Left ventricle myocardium inferior (tissue), 1 donor: ENCODE measurements at regions of chr9 and their contacts with region 1.

Region 1: GRCh38 chr9:94139672-94140417 is 55.6 kb downstream of the PTPDC1 start:
- DNase-seq: peak; percentile 85
- H3K4me3 ChIP-seq: peak overlapping the region; percentile 40
- H3K27ac ChIP-seq: peak overlapping the region; percentile 90
- H3K4me1 ChIP-seq: peaks cover 41% of the 10 kb centered on the region
- H3K27me3 ChIP-seq: no peaks in the 10 kb centered on the region
- CTCF ChIP-seq: no peak

Region 2: GRCh38 chr9:94084314-94084713 is 55.5 kb before region 1 on chr9 and contains the start of gene PTPDC1:
- intact Hi-C with region 1: loop called (anchors 10 kb)
- DNase-seq: no peak
- H3K4me3 ChIP-seq: peak within 1 kb of the TSS; percentile 23
- H3K27ac ChIP-seq: peak within 1 kb of the TSS; percentile 75
- H3K4me1 ChIP-seq: peaks cover 55% of the 10 kb centered on the region
- H3K27me3 ChIP-seq: no peaks in the 10 kb centered on the region
- CTCF ChIP-seq: no peak
- total RNA-seq, gene PTPDC1: 7.9 TPM